ENCODE measurements at regions of chr18 and their contacts with region 1.

Region 1: DNA sequence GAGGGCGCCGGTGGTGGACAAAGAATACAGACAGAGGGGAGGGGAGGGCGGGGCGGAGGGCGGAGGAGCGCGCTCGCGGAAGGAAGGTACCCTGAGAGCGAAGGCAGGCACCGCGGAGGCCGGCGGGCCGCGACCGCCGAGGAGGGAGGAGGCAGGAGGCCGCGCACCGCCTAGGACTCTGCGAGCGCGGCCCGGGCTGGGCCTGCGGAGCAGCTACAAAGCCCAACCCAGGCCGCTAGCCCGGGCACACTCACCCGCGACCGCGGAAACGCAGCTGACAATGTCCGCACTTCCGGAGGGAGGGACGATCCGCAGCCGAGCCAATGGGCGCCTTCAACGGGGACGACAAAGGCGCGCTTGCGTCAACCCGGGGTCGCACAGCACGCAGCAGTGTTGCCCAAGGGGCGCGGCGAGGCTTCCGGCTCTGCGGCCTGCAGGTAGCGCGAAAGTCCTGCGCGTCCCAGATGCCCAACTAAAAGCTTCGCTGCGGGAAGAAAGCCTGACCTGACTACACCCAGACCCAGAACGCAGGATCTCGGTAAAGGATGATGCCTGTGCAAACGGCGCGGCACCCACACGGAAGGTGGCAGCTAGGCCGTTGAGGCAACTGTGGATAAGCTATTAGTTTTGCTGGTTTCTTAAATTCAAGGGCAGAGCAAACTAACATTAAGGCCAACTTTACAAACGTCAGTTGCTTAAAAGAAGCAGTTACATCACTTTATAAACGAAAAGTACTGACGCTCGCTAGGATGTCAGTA is at the start of gene C18orf32:
- DNase-seq: peak; percentile 87 to 97 (median 95)
- ATAC-seq: peak; percentile 85
- H3K4me3 ChIP-seq: peak within 1 kb of the TSS; percentile 76 to 80
- H3K4me3 Mint-ChIP-seq: peak within 1 kb of the TSS; percentile 97
- H3K27ac ChIP-seq: peak within 1 kb of the TSS; percentile 84 to 90
- H3K27ac Mint-ChIP-seq: peak within 1 kb of the TSS; percentile 98
- H3K4me1 ChIP-seq: peaks cover 49% of the 10 kb centered on the region
- H3K4me1 Mint-ChIP-seq: peaks cover 70% of the 10 kb centered on the region
- H3K27me3 ChIP-seq: no peaks in the 10 kb centered on the region
- H3K27me3 Mint-ChIP-seq: no peaks in the 10 kb centered on the region
- CTCF ChIP-seq: no peak
- total RNA-seq, gene C18orf32: 40.9 to 44.1 TPM

Region 2: DNA sequence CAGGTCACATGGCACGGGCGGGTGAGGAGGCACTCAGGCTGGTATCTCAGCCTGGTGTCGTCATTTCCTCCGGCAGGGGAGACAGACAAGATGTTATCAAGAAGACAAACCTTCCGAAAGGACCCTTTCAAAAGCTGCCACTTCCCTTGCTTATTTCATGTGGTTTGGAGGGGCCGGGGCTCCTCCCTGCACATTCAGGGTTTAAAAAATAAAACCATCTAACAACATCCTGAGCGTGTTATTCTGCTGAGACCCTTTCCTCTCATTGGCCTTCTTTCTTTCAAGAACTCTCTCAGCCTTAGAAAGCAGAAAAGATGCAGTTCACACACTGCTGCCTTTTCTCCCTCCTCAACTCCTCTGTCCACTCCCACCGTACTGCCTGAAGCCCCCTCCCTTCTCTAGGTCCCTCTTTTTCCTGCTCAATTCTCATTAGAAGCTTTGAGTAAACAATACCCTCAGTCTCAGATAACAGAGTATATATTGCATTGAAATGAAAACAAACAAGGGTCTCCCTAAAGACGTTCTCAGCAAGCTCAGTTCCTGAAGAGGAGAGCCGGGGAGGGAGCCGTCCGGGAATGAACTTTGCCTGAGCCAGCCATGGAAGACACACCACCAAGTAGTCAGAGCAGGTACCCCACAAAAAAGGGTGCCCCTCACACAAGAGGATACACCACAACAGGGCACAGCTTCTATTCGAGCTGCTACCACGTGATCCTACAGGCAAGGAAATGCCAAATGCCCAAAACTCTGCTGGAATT is 546.1 kb before region 1 on chr18:
- CTCF ChIA-PET with region 1: no interaction called
- POLR2A ChIA-PET with region 1: no interaction called
- intact Hi-C with region 1: loop called in 1 of 2 experiments (anchors 5 kb)
- DNase-seq: peak; percentile 74 to 99 (median 90)
- ATAC-seq: peak; percentile 81
- H3K4me3 ChIP-seq: peak overlapping the region; percentile 20 to 49
- H3K4me3 Mint-ChIP-seq: peak overlapping the region; percentile 82
- H3K27ac ChIP-seq: peak overlapping the region; percentile 53 to 80
- H3K27ac Mint-ChIP-seq: peak overlapping the region; percentile 96
- H3K4me1 ChIP-seq: peaks cover 81% of the 10 kb centered on the region
- H3K4me1 Mint-ChIP-seq: peaks cover 93% of the 10 kb centered on the region
- H3K27me3 ChIP-seq: no peaks in the 10 kb centered on the region
- H3K27me3 Mint-ChIP-seq: no peaks in the 10 kb centered on the region
- CTCF ChIP-seq: no peak

Region 3: GRCh38 chr18:49747876-49748275 is 260.7 kb after region 1 on chr18:
- CTCF ChIA-PET with region 1: no interaction called
- POLR2A ChIA-PET with region 1: no interaction called
- intact Hi-C with region 1: no loop called
- DNase-seq: no peak
- ATAC-seq: no peak
- H3K4me3 ChIP-seq: no peak overlapping the region
- H3K4me3 Mint-ChIP-seq: no peak overlapping the region
- H3K27ac ChIP-seq: no peak overlapping the region
- H3K27ac Mint-ChIP-seq: no peak overlapping the region
- H3K4me1 ChIP-seq: peaks cover 14% of the 10 kb centered on the region
- H3K4me1 Mint-ChIP-seq: peaks cover 22% of the 10 kb centered on the region
- H3K27me3 ChIP-seq: no peaks in the 10 kb centered on the region
- H3K27me3 Mint-ChIP-seq: peaks cover 5% of the 10 kb centered on the region
- CTCF ChIP-seq: no peak

Region 4: DNA sequence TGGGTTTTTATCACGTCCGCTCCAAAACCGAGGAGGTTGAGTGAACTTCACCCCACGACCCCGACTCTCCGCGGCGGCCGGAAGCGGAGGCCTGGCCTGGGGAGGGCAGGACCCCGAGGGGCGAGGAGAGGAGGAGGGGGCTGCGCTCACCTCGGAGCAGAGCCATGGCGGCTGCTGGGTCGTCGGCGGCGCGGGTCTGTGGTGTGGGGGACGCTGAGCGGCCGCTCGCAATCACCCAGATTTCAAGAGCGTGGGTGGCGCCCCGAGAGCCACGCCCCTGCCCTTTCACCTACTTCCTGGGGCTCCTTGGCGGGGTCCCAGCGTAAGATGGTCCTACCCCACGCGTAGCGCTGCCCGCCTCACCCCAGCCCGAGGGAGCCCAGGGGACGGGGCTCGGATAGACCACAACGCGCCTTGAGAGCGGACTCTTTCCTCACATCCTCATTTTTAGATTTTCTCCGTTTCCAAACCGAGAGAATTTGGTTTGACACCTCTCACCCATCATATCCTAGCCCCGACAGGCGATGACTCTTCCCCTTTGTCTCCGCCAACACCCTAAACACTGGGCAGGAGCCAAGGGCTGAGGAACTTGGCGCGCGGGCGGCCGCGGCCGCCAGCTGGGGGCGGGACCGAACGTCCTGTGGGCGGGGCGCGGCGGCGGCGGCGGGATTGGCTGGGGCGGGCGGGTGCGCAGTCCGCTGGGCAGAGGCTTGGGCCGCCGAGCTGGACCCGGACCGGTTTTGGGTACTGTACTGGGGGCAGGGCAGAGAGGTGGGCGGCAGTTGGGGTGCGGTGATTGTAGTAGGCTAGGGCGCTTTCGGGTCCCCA is 326.4 kb after region 1 on chr18 and contains the start of gene ACAA2:
- CTCF ChIA-PET with region 1: no interaction called
- POLR2A ChIA-PET with region 1: interaction called, 4 read pairs
- intact Hi-C with region 1: loop called (anchors 1 to 2 kb)
- DNase-seq: peak; percentile 53 to 91 (median 77)
- ATAC-seq: peak; percentile 81
- H3K4me3 ChIP-seq: peak within 1 kb of the TSS; percentile 88 to 93
- H3K4me3 Mint-ChIP-seq: peak within 1 kb of the TSS; percentile 97
- H3K27ac ChIP-seq: peak within 1 kb of the TSS; percentile 90 to 95
- H3K27ac Mint-ChIP-seq: peak within 1 kb of the TSS; percentile 95
- H3K4me1 ChIP-seq: peaks cover 37% of the 10 kb centered on the region
- H3K4me1 Mint-ChIP-seq: peaks cover 62% of the 10 kb centered on the region
- H3K27me3 ChIP-seq: no peaks in the 10 kb centered on the region
- H3K27me3 Mint-ChIP-seq: no peaks in the 10 kb centered on the region
- CTCF ChIP-seq: no peak
- total RNA-seq, gene ACAA2: 9.5 to 10.0 TPM

Region 5: GRCh38 chr18:50281295-50281971 is 794.3 kb after region 1 on chr18 and contains the start of gene MBD1:
- CTCF ChIA-PET with region 1: no interaction called
- POLR2A ChIA-PET with region 1: interaction called, 7 read pairs
- intact Hi-C with region 1: loop called in 1 of 2 experiments (anchors 2 kb)
- DNase-seq: peak; percentile 93 to 99 (median 97)
- ATAC-seq: peak; percentile 92
- H3K4me3 ChIP-seq: peak within 1 kb of the TSS; percentile 80 to 90
- H3K4me3 Mint-ChIP-seq: peak within 1 kb of the TSS; percentile 98
- H3K27ac ChIP-seq: peak within 1 kb of the TSS; percentile 81 to 90
- H3K27ac Mint-ChIP-seq: peak within 1 kb of the TSS; percentile 96
- H3K4me1 ChIP-seq: peaks cover 38% of the 10 kb centered on the region
- H3K4me1 Mint-ChIP-seq: peaks cover 49% of the 10 kb centered on the region
- H3K27me3 ChIP-seq: no peaks in the 10 kb centered on the region
- H3K27me3 Mint-ChIP-seq: no peaks in the 10 kb centered on the region
- CTCF ChIP-seq: no peak
- total RNA-seq, gene MBD1: 88.5 to 96.0 TPM

Region 6: GRCh38 chr18:50307738-50308470 is 820.8 kb after region 1 on chr18:
- CTCF ChIA-PET with region 1: no interaction called
- POLR2A ChIA-PET with region 1: no interaction called
- intact Hi-C with region 1: loop called in 1 of 2 experiments (anchors 1 kb)
- DNase-seq: peak; percentile 75 to 96 (median 91)
- ATAC-seq: peak; percentile 99
- H3K4me3 ChIP-seq: peak overlapping the region; percentile 52 to 59
- H3K4me3 Mint-ChIP-seq: peak overlapping the region; percentile 96
- H3K27ac ChIP-seq: peak overlapping the region; percentile 24 to 41
- H3K27ac Mint-ChIP-seq: peak overlapping the region; percentile 63
- H3K4me1 ChIP-seq: peaks cover 6% of the 10 kb centered on the region
- H3K4me1 Mint-ChIP-seq: peaks cover 20% of the 10 kb centered on the region
- H3K27me3 ChIP-seq: peaks cover 0 to 4% of the 10 kb centered on the region in 2 experiments
- H3K27me3 Mint-ChIP-seq: peaks cover 12% of the 10 kb centered on the region
- CTCF ChIP-seq: no peak